ENCODE measurements at regions of chr3 and their contacts with region 1.

Region 1: GRCh38 chr3:193665370-193665989 is 72.5 kb downstream of the OPA1 start:
- H3K4me3 ChIP-seq: no peak overlapping the region
- H3K27ac ChIP-seq: no peak overlapping the region
- H3K4me1 ChIP-seq: no peaks in the 10 kb centered on the region
- CTCF ChIP-seq: no peak

Region 2: GRCh38 chr3:193780810-193781472 is 115.5 kb after region 1 on chr3:
- CTCF ChIA-PET with region 1: interaction called, 23 read pairs
- POLR2A ChIA-PET with region 1: no interaction called
- H3K4me3 ChIP-seq: no peak overlapping the region
- H3K27ac ChIP-seq: peak overlapping the region; percentile 42; the same call in 1 of the 2 replicates
- H3K4me1 ChIP-seq: peaks cover 8% of the 10 kb centered on the region
- CTCF ChIP-seq: no peak

Region 3: DNA sequence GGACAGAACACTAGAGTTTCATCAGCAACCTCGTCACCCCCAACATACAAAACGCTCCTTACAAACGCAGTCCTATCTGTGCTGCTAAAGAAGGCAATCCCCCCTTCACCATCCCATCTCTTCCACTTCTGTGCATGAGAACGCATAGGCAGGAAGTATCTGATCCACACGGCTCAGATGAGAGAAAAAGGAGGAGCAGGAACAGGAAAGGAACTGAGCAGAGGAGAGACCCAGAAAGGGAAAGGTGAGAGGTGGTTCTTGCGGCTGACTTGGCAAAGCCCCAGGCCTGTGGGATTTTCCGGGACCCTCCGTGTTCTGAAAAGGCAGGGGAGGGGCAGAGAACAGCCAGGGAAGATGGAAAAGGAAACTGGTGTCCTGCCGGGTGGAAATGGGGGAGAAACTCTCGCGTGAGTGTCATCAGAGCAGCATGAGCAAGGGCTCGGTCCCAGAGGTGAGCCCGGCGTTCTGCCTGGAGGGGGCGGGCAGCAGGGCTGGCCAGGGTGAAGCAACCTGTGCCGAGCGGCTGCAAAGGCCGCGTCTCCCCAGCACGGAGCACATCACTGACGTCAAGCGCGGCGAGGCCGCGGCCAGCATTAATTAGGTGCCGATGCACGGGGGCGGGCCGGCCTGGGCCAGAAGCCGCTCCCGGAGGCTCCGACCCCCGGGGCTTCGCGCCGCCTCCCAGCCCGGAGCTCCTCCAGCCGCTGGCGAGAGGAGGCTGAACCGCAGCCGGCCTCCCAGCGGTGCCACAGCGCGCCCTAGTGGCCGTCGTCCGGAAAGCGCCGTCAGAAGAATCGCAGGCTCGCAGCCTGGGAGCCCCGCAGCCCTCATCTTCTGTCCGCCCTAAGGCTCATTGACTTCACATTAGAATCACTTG is 649.8 kb after region 1 on chr3:
- CTCF ChIA-PET with region 1: interaction called, 39 read pairs
- POLR2A ChIA-PET with region 1: no interaction called
- H3K4me3 ChIP-seq: peak overlapping the region; percentile 33
- H3K27ac ChIP-seq: peak overlapping the region; percentile 83
- H3K4me1 ChIP-seq: no peaks in the 10 kb centered on the region; the same call in 1 of the 2 replicates
- CTCF ChIP-seq: peak; percentile 88